Activated T-helper 2 cell treated with anti-CD3 and anti-CD28 coated beads, Interferon-gamma antibody, Interleukin-2, Interleukin-4, amounts not matched to agents 10 μg/mL and 5 μg/mL and 100 μg/mL, durations not matched to agents 14 hours and 24 hours and 36 hours (primary cell): ENCODE measurements at regions of chr12 and their contacts with region 1.

Region 1: DNA sequence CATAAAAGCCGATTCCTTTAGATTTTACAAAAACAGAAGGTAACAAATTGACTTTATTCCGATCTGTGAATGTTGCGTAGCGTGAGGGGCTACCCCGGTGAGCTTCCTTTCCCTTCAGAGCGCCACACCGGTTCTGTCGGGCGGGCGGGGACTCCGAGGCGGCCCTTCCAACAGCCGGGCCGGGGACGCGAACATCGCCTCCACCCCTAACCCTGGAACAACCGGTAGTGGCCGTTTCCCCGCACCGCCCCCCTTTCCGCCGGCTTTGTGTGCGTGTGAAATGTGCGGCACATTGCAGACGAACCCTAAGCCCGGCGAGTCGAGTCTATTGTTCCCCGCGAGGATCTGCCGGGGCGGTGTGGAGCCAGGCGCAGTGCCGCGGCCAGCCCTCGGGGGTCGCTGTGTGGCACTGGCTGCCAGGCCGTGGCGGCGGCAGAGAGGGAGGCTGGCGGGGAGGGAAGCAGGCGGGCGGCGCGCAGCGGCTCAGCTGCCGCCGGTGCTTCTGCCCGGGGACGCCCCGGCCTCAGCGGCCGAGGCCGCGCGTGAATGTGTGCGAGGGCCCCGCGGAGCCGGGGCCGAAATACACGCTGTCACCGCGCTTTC is 775 bp upstream of the ARID2 start:
- DNase-seq: peak; percentile 96
- H3K4me3 Mint-ChIP-seq: peak overlapping the region; percentile 100
- H3K27ac Mint-ChIP-seq: peak overlapping the region; percentile 100
- H3K4me1 Mint-ChIP-seq: peaks cover 31% of the 10 kb centered on the region
- H3K27me3 Mint-ChIP-seq: no peaks in the 10 kb centered on the region

Region 2: GRCh38 chr12:43758728-43759563 is 1969.8 kb before region 1 on chr12 and contains the starts of genes IRAK4 and PUS7L:
- intact Hi-C with region 1: loop called (anchors 5 kb)
- DNase-seq: peak; percentile 91
- H3K4me3 Mint-ChIP-seq: peak within 1 kb of the TSS; percentile 96
- H3K27ac Mint-ChIP-seq: peak within 1 kb of the TSS; percentile 97
- H3K4me1 Mint-ChIP-seq: peaks cover 52% of the 10 kb centered on the region
- H3K27me3 Mint-ChIP-seq: no peaks in the 10 kb centered on the region
- total RNA-seq, gene IRAK4: 26.5 and 28.5 TPM in 2 replicates
- total RNA-seq, gene PUS7L: 22.8 and 24.4 TPM in 2 replicates

Region 3: DNA sequence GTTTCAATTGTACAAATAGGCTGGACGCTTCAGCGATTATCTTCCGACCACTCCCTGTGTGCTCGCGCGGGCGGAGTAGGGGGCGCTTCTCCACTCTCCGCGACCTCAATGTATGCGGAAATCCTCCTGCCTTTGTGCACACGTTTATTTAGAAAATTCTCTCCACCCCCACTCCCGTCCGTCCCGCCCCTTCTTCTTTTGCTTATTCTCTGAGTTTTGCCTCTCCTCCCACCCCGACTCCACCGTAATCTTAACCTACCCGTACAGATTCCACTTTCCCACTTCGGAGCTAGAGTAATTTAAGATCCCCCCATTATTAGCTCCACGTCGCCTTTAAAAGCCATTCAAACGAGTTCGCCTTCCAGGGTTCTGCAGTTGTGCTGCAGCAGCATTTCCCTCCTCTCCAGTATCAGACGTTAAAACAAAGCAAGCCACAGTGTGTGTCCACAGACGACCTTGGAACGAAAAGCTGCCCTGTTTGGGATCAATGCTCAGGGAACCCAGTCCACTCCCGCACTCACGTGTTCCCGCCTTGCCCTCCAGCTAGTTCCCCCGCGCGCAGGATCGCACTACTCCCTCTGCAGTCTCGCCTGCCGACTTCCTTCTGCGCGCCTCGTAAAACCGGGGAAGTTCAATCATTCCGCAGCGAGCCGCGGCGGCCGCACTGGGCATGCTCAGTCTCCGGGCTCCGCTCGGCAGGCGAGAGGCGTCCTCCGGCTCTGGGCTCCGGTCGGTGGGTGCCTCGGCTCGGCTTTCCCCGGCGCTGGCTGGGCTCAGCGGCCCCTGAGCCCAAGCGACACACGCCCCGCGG is 513.1 kb before region 1 on chr12 and contains the start of gene ANO6:
- intact Hi-C with region 1: loop called (anchors 1 kb)
- DNase-seq: peak; percentile 74
- H3K4me3 Mint-ChIP-seq: peak within 1 kb of the TSS; percentile 97
- H3K27ac Mint-ChIP-seq: peak within 1 kb of the TSS; percentile 95
- H3K4me1 Mint-ChIP-seq: peaks cover 34% of the 10 kb centered on the region
- H3K27me3 Mint-ChIP-seq: no peaks in the 10 kb centered on the region
- total RNA-seq, gene ANO6: 25.2 and 25.7 TPM in 2 replicates

Region 4: GRCh38 chr12:45543906-45544315 is 184.8 kb before region 1 on chr12:
- intact Hi-C with region 1: loop called (anchors 1 kb)
- DNase-seq: peak; percentile 46
- H3K4me3 Mint-ChIP-seq: no peak overlapping the region
- H3K27ac Mint-ChIP-seq: no peak overlapping the region
- H3K4me1 Mint-ChIP-seq: no peaks in the 10 kb centered on the region
- H3K27me3 Mint-ChIP-seq: peaks cover 36% of the 10 kb centered on the region

Region 5: DNA sequence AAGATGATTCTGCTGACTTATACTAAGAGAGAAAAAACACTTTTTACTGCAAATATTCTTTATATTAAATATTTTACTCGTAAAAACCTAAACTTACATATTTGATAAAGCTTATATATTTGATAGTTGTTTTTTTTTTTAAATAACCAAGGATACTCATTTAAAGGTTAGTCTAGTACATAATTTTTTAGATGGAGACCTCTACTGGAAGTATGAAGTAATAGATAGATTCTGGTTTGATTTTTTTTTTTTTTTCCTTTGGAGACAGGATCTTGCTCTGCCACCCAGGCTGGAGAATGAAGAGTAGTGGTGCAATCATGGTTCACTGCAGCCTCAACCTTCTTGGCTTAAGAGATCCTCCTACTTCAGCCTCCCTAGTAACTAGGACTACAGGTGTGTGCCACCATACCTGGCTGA is 17.1 kb after region 1 on chr12:
- intact Hi-C with region 1: loop called (anchors 2 kb)
- DNase-seq: no peak
- H3K4me3 Mint-ChIP-seq: no peak overlapping the region
- H3K27ac Mint-ChIP-seq: no peak overlapping the region
- H3K4me1 Mint-ChIP-seq: peaks cover 39% of the 10 kb centered on the region
- H3K27me3 Mint-ChIP-seq: no peaks in the 10 kb centered on the region

Region 6: DNA sequence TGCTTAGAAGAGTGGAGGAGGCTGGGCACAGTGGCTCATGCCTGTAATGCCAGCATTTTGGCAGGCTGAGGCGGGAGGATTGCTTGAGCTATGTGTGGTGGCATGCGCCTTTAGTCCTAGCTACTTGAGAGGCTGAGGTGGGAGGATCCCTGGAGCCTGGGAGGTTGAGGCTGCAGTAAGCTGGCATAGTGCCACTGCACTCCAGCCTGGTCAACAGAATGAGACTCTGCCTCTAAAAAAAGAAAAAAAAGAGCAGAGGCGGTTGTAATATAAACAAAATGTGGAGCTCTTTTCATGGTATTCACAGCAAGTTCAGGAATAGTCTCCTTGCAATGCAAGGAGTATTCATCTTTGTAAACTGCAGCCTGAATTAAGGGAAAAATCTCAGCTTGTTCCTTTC is 27.9 kb after region 1 on chr12:
- intact Hi-C with region 1: no loop called
- DNase-seq: no peak
- H3K4me3 Mint-ChIP-seq: no peak overlapping the region
- H3K27ac Mint-ChIP-seq: no peak overlapping the region
- H3K4me1 Mint-ChIP-seq: peaks cover 11% of the 10 kb centered on the region
- H3K27me3 Mint-ChIP-seq: no peaks in the 10 kb centered on the region

Region 7: GRCh38 chr12:45789025-45789424 is 60.3 kb after region 1 on chr12:
- intact Hi-C with region 1: no loop called
- DNase-seq: no peak
- H3K4me3 Mint-ChIP-seq: no peak overlapping the region
- H3K27ac Mint-ChIP-seq: no peak overlapping the region
- H3K4me1 Mint-ChIP-seq: peaks cover 1% of the 10 kb centered on the region
- H3K27me3 Mint-ChIP-seq: no peaks in the 10 kb centered on the region

Region 8: DNA sequence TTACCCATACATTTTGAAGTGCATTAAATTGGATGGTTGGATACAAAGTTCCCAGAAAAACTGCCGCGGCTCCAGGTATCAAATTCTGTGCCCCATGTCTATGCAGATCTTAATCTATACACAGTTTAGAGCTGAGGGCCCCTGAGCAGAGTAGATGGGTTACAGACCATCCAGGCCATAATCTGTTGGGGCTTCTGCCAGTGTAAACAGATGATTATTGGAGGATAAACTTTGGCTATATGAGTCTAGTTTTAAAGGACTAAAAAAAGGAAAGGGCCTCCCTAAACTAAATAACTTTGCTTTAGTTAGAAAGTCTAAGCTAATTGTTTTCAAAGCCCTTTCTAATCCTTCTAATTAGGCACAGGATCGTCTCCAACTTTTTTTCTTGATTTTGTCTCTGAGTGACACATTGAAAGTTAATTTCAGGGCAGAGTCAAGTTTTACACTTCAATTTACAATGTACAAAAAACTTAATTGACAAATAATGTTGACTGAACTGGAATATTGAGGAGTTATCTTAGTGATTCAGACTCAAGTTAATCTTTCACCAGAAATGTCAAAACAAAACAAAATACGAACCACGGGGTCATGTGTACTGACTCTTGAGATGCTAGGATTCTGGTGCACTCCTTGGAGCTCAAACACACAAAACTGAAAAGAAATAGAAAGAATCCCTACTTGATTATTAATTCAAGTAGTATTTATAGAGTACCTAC is 395.6 kb after region 1 on chr12:
- intact Hi-C with region 1: no loop called
- DNase-seq: no peak
- H3K4me3 Mint-ChIP-seq: no peak overlapping the region
- H3K27ac Mint-ChIP-seq: no peak overlapping the region
- H3K4me1 Mint-ChIP-seq: peaks cover 3% of the 10 kb centered on the region
- H3K27me3 Mint-ChIP-seq: peaks cover 45% of the 10 kb centered on the region

Region 9: DNA sequence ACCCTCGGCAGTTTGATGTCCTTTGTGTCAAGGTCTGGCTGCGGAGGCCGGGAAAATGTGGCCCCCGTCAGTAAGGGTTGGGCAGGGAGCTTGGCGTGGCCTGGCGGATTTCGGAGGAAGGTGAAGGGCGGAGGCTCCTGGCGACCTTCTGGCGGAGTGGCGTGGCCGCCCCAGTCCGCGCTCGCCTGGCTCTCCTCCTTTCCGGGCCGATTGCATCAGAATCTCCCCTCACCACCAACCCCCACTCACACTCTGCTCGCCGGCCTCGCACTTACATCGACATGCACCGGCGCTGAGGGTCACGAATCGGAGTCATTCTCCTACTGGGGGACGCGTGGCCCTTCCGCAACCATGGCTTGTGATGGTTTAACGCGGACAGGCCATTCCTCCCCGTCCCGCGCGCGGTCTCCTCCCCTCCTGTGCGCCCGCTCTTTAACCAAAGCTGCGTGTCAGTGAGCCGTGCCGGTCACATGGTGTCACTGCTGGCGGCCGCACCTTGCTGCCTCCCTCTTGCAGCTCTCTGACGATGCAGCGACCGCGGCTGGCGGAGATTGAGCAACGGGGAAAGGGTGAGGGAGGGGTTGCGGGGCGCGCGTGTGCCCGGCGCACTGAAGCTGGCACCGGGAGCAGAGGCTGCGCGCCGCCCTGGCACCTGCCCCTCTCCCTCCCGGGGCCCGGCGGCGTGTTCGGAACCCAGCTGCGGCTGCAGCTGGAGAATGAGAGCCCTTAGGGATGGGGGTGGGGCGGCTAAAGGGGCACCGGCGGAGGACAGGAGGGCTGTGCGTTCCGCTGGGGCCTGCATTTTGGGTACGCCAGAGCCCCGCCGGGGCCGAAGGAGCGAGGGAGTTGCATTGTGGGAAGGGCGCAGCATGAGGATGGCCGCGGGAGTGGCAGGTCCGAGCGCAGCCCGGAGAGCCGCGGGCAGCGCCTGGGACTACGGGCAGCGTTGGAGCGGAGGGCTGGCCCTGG is 540.1 kb after region 1 on chr12 and contains the start of gene SLC38A1:
- intact Hi-C with region 1: loop called (anchors 10 kb)
- DNase-seq: peak; percentile 86
- H3K4me3 Mint-ChIP-seq: no peak within 1 kb of the TSS
- H3K27ac Mint-ChIP-seq: no peak within 1 kb of the TSS
- H3K4me1 Mint-ChIP-seq: peaks cover 26% of the 10 kb centered on the region
- H3K27me3 Mint-ChIP-seq: no peaks in the 10 kb centered on the region
- total RNA-seq, gene SLC38A1: 152 and 154 TPM in 2 replicates